PC-9 (cell line): ENCODE measurements at regions of chr10 and their contacts with region 1.

Region 1: GRCh38 chr10:10911471-10911921 is 106.2 kb upstream of the CELF2 start:
- DNase-seq: peak; percentile 87 to 91
- H3K4me3 ChIP-seq: peak overlapping the region; percentile 46
- H3K27ac ChIP-seq: peak overlapping the region; percentile 60
- H3K4me1 ChIP-seq: peaks cover 16% of the 10 kb centered on the region
- H3K27me3 ChIP-seq: no peaks in the 10 kb centered on the region
- CTCF ChIP-seq: no peak

Region 2: DNA sequence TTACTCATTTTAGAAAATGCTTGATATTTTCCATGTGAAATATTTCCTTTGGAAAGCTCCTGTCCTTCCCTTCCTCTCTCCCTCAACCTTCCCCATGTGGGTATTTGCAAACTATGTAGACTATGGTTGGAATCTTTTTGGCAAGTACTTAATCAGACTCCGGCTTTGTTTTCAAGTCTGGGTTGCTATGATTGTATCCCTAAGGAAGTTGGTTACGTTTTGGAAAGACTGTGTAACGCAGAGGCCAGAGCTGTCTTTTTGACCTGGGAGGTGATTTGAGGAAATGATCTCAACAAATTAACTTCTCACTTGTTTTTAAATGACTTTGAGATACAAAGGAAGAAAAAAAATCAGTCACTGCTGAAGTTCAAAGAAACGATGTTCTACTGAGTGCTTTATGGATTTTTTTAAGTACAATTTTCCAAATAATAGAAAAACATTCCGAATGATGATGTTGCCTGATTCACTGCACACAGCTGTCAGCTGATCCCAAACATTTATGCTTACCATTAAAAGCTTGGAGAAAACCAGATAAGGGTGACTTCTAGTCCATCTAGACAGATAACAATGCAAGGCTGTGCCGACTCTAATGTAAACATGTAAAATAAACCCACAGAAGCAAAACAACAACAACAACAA is 39.3 kb before region 1 on chr10:
- CTCF ChIA-PET with region 1: no interaction called
- POLR2A ChIA-PET with region 1: no interaction called
- intact Hi-C with region 1: loop called (anchors 1 kb)
- DNase-seq: peak; percentile 32 to 70
- H3K4me3 ChIP-seq: no peak overlapping the region
- H3K27ac ChIP-seq: no peak overlapping the region
- H3K4me1 ChIP-seq: no peaks in the 10 kb centered on the region
- H3K27me3 ChIP-seq: no peaks in the 10 kb centered on the region
- CTCF ChIP-seq: no peak

Region 3: DNA sequence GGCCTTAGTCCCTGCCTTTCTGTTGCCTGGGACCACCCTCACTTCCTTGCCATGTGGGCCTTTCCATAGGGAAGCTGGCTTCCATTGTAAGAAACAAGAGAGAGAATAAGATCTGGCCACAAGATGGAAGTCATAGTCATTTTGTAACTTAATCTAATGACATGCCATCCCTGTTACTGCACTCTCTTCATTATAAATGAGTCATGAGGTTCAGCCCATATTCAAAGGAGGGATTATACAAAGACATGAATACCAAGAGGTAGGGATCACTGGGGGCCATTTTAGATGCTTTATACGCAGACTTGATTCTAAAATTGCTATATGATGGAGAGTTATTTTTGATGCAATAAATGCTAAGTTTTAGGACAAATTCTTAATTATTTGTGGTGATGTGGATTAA is 30.9 kb after region 1 on chr10:
- CTCF ChIA-PET with region 1: no interaction called
- POLR2A ChIA-PET with region 1: no interaction called
- intact Hi-C with region 1: no loop called
- DNase-seq: no peak
- H3K4me3 ChIP-seq: no peak overlapping the region
- H3K27ac ChIP-seq: no peak overlapping the region
- H3K4me1 ChIP-seq: no peaks in the 10 kb centered on the region
- H3K27me3 ChIP-seq: no peaks in the 10 kb centered on the region
- CTCF ChIP-seq: no peak